CD4-positive, alpha-beta T cell (primary cell): ENCODE measurements at regions of chr1 and their contacts with region 1.

Region 1: GRCh38 chr1:108691942-108692723 is at the start of gene PRPF38B:
- DNase-seq: peak; percentile 88 to 97 (median 91)
- ATAC-seq: peak; percentile 84
- H3K4me3 ChIP-seq: peak within 1 kb of the TSS; percentile 89
- H3K4me3 Mint-ChIP-seq: peak within 1 kb of the TSS; percentile 95
- H3K27ac ChIP-seq: peak within 1 kb of the TSS; percentile 99
- H3K27ac Mint-ChIP-seq: peak within 1 kb of the TSS; percentile 97
- H3K4me1 ChIP-seq: peaks cover 24% of the 10 kb centered on the region
- H3K4me1 Mint-ChIP-seq: peaks cover 51% of the 10 kb centered on the region
- H3K27me3 ChIP-seq: no peaks in the 10 kb centered on the region
- H3K27me3 Mint-ChIP-seq: no peaks in the 10 kb centered on the region
- CTCF ChIP-seq: no peak
- total RNA-seq, gene PRPF38B: 114 to 120 TPM

Region 2: DNA sequence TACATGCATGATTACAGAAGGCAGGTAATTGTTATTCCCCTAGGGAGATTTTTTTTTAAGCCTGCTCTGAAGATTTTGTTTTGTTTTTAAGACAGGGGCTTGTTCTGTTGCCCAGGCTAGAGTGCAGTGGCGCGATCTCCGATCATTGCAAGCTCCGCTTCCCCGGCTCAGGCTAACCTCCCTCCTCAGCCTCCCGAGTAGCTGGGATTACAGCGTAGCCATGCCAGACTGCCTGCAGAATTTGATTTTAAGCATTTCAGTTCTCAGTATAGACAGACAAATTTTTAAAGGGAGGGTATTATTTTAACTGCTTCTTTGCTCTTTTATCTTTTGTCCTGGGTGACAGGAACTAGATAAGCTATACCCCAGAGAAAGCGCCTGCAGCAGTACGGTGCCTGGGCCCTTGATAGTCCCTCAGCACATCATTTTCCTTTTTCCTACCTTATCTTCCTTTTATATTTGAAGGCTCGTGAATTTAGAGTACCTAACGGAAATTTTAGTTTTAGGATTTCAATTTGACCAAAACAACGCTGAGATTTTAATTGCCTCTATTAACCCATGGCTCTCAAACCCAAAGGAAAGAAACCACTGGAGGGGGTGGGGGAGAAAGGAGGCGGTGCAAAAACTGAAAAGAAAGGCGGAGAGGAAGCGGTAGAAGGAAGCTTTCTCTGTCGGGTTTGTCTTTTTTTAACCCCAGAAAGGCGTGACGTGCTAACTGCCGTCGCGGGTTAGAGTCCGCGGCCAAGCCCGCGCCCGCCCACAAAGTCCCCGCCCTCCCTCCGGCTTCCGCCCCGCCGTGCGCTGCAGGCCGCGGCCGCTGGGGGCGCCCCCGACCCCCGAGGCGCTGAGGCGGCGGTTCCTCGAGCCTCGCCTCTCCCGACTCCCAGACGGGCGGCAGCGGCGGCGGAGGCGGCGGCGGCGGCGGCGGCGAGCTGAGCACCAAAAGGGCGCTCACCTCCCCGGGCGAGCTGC is 132.6 kb before region 1 on chr1 and contains the start of gene EEIG2:
- CTCF ChIA-PET with region 1: interaction called, 28 read pairs
- POLR2A ChIA-PET with region 1: interaction called, 66 read pairs
- intact Hi-C with region 1: loop called (anchors 2 to 5 kb)
- DNase-seq: peak; percentile 85 to 96 (median 90)
- ATAC-seq: peak; percentile 90
- H3K4me3 ChIP-seq: peak within 1 kb of the TSS; percentile 77
- H3K4me3 Mint-ChIP-seq: peak within 1 kb of the TSS; percentile 99
- H3K27ac ChIP-seq: peak within 1 kb of the TSS; percentile 57
- H3K27ac Mint-ChIP-seq: peak within 1 kb of the TSS; percentile 88
- H3K4me1 ChIP-seq: peaks cover 30% of the 10 kb centered on the region
- H3K4me1 Mint-ChIP-seq: peaks cover 47% of the 10 kb centered on the region
- H3K27me3 ChIP-seq: no peaks in the 10 kb centered on the region
- H3K27me3 Mint-ChIP-seq: no peaks in the 10 kb centered on the region
- CTCF ChIP-seq: peak; percentile 56
- total RNA-seq, gene EEIG2: 11.6 to 12.2 TPM

Region 3: GRCh38 chr1:108678706-108679105 is 13.4 kb before region 1 on chr1:
- CTCF ChIA-PET with region 1: interaction called, 3 read pairs
- POLR2A ChIA-PET with region 1: interaction called, 25 read pairs
- intact Hi-C with region 1: no loop called
- DNase-seq: peak in 2 of 14 experiments; percentile 27 to 29
- ATAC-seq: no peak
- H3K4me3 ChIP-seq: no peak overlapping the region
- H3K4me3 Mint-ChIP-seq: no peak overlapping the region
- H3K27ac ChIP-seq: no peak overlapping the region
- H3K27ac Mint-ChIP-seq: no peak overlapping the region
- H3K4me1 ChIP-seq: peaks cover 8% of the 10 kb centered on the region
- H3K4me1 Mint-ChIP-seq: peaks cover 6% of the 10 kb centered on the region
- H3K27me3 ChIP-seq: no peaks in the 10 kb centered on the region
- H3K27me3 Mint-ChIP-seq: peaks cover 2% of the 10 kb centered on the region
- CTCF ChIP-seq: no peak

Region 4: GRCh38 chr1:108753363-108753762 is 61.2 kb after region 1 on chr1:
- CTCF ChIA-PET with region 1: no interaction called
- POLR2A ChIA-PET with region 1: interaction called, 24 read pairs
- intact Hi-C with region 1: no loop called
- DNase-seq: no peak
- ATAC-seq: no peak
- H3K4me3 ChIP-seq: no peak overlapping the region
- H3K4me3 Mint-ChIP-seq: no peak overlapping the region
- H3K27ac ChIP-seq: no peak overlapping the region
- H3K27ac Mint-ChIP-seq: no peak overlapping the region
- H3K4me1 ChIP-seq: peaks cover 3% of the 10 kb centered on the region
- H3K4me1 Mint-ChIP-seq: peaks cover 44% of the 10 kb centered on the region
- H3K27me3 ChIP-seq: no peaks in the 10 kb centered on the region
- H3K27me3 Mint-ChIP-seq: no peaks in the 10 kb centered on the region
- CTCF ChIP-seq: no peak

Region 5: DNA sequence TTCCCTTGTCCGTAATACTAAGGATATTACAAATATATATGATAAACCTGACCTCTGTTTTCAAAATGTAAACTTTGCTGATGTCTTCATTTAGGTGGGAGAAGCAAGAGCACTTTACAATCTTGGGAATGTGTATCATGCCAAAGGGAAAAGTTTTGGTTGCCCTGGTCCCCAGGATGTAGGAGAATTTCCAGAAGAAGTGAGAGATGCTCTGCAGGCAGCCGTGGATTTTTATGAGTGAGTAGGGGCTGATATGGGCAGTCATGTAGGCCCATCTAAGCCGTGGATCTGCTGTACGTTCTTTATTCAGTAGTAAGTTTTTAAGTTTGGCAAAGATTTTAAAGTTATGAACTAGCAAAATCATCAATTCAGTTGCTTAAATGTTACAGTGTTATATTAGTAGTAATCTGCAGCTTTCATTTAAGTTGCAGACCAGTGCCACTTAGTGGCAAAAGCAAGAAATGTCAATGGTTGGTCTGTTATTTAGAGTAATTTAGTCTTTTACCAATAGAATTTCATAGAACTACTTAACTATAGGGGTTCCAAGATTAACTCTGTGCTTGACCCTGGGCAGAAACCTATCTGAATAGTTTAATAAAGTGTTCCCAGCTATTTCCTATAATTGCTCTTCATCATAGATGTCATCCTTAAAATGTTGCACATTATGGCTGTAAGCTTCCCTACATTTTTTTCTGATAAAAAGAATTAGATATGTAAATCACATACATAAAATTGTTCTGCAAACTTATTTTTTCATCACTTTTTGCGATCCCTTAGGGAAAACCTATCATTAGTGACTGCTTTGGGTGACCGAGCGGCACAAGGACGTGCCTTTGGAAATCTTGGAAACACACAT is 206.0 kb after region 1 on chr1:
- CTCF ChIA-PET with region 1: interaction called, 5 read pairs
- POLR2A ChIA-PET with region 1: interaction called, 13 read pairs
- intact Hi-C with region 1: loop called (anchors 2 kb)
- DNase-seq: peak in 6 of 14 experiments; percentile 11 to 72 (median 54)
- ATAC-seq: peak; percentile 86
- H3K4me3 ChIP-seq: no peak overlapping the region
- H3K4me3 Mint-ChIP-seq: no peak overlapping the region
- H3K27ac ChIP-seq: no peak overlapping the region
- H3K27ac Mint-ChIP-seq: no peak overlapping the region
- H3K4me1 ChIP-seq: no peaks in the 10 kb centered on the region
- H3K4me1 Mint-ChIP-seq: no peaks in the 10 kb centered on the region
- H3K27me3 ChIP-seq: no peaks in the 10 kb centered on the region
- H3K27me3 Mint-ChIP-seq: no peaks in the 10 kb centered on the region
- CTCF ChIP-seq: peak; percentile 78

Region 6: DNA sequence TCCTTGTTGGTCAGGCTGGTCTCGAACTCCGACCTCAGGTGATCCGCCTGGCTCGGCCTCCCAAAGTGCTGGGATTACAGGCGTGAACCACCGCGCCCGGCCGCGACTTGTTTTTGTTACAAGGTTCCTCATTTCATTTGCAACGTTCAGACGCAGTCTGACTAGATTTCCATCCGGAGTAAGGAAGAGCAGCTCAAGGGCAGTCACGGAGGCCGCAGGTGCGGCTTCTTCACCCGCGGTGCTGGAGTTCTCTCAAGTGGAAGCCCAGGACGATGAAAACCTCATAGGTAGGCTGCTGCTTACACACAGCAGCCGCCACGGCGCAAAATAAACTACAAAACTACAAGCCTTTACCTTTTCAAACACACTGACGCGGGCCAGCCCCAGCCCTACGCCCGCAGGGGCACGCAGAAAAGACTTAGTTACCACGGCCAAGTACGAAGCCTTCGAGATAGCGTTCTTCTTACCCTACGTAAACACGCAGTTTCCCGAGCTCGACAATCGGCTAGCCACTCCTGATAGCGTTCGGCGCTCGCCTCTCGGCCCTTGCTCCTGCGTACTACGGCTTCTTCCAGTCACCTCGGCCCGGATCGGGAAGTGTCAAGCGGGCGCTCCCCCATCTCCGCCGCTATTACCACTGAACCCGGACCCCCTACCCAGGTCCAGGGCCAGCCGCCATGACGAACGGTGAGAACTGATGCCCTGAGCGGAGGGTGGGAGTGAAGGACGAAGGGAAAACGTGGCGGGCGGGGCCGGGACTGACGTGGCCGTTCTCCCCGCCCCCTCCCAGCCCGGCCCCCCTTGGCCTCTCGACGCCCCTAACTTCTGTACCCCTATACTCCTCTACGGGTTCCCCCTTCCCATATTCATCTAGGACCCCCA is 398.3 kb after region 1 on chr1 and contains the start of gene TMEM167B:
- CTCF ChIA-PET with region 1: no interaction called
- POLR2A ChIA-PET with region 1: interaction called, 19 read pairs
- intact Hi-C with region 1: no loop called
- DNase-seq: peak; percentile 76 to 94 (median 82)
- ATAC-seq: peak; percentile 86
- H3K4me3 ChIP-seq: peak within 1 kb of the TSS; percentile 98
- H3K4me3 Mint-ChIP-seq: peak within 1 kb of the TSS; percentile 97
- H3K27ac ChIP-seq: peak within 1 kb of the TSS; percentile 84 to 98
- H3K27ac Mint-ChIP-seq: peak within 1 kb of the TSS; percentile 94
- H3K4me1 ChIP-seq: peaks cover 27% of the 10 kb centered on the region
- H3K4me1 Mint-ChIP-seq: peaks cover 44% of the 10 kb centered on the region
- H3K27me3 ChIP-seq: no peaks in the 10 kb centered on the region
- H3K27me3 Mint-ChIP-seq: no peaks in the 10 kb centered on the region
- CTCF ChIP-seq: no peak
- total RNA-seq, gene TMEM167B: 70.2 to 71.0 TPM